OCI-LY7 (cell line): ENCODE measurements at regions of chr3 and their contacts with region 1.

Region 1: DNA sequence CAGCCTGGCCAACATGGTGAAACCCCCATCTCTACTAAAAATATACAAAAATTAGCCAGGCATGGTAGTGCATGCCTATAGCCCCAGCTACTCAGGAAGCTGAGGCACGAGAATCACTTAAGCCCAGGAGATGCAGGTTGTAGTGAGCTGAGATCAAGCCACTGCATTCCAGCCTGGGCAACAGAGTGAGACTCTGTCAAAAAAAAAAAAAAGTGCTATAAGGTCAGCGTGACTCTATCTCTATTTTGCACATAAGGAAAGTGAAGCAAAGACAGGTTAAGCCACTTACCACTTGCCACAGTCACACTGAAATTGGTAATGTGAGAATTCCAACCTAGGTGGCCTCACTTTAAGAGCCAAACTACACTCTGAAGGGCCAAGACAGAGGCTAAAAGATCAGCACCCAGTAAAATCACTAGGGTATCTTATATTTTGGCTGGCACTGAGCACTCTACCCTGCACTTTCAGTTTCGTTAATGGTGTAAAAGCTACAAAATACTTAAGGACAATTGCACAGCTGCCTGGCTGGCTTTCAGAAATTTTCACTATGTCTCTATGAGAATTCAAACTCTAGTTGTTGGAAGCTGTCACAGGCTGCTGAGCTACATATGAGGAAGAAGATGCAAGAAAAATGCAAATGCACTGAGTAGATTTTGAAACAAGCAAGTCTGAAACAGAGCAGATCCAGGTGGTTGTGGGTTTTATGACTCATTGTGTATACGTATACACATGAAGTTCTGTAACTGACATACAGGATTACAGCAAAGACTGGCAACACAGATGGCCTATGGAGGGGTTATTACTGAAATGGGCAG is 32.7 kb downstream of the TRANK1 start:
- DNase-seq: peak; percentile 98
- H3K4me3 ChIP-seq: peak overlapping the region; percentile 66
- H3K27ac ChIP-seq: peak overlapping the region; percentile 99
- H3K4me1 ChIP-seq: peaks cover 78% of the 10 kb centered on the region
- CTCF ChIP-seq: peak; percentile 20; the same call in 1 of the 2 replicates

Region 2: DNA sequence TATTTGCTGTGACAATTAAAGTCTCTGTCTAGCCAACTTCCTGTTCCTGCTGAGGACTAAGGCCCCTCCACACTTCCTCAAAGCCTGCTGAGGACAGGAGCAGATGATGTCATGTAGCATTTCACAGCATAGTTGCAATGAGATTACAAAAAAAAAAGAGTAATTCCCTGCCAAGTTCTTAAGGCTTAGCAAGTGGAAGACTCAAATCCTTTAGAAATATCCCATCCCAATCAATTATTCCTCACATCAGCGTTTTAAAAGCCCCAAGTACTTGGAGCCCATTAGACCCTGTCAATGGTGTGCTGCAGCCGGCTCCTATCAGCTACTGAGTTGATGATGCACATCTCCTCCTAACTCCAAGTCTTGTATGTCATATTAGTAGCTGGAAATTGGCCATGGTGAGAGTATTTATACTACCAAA is 19.1 kb before region 1 on chr3:
- CTCF ChIA-PET with region 1: interaction called, 3 read pairs
- POLR2A ChIA-PET with region 1: interaction called, 55 read pairs
- intact Hi-C with region 1: no loop called
- DNase-seq: peak; percentile 79
- H3K4me3 ChIP-seq: peak overlapping the region; percentile 34
- H3K27ac ChIP-seq: peak overlapping the region; percentile 82
- H3K4me1 ChIP-seq: peaks cover 67% of the 10 kb centered on the region
- CTCF ChIP-seq: no peak

Region 3: DNA sequence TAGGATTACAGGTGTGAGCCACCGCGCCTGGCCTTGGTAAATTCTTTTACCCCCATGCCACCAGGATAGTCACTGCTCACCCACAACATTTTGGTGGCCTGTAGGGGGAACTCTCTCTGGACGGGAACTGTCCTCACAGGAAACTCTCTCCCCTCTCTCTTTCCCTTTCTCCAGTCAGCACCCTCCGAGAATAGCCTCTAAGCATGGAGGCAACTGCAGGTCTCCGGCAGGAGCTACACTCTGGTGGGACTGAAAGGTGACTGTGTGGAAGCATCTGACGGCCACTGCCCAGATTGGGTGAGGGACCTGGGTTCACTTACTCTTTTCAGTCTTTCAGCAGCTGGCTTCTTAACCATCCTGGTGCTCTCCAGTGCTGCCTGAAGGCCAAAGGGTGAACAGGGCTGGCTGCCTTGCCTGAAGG is 11.3 kb after region 1 on chr3:
- CTCF ChIA-PET with region 1: interaction called, 7 read pairs
- POLR2A ChIA-PET with region 1: interaction called, 50 read pairs
- intact Hi-C with region 1: loop called (anchors 1 kb)
- DNase-seq: peak; percentile 60
- H3K4me3 ChIP-seq: peak overlapping the region; percentile 76
- H3K27ac ChIP-seq: peak overlapping the region; percentile 87
- H3K4me1 ChIP-seq: peaks cover 61% of the 10 kb centered on the region
- CTCF ChIP-seq: peak; percentile 70

Region 4: DNA sequence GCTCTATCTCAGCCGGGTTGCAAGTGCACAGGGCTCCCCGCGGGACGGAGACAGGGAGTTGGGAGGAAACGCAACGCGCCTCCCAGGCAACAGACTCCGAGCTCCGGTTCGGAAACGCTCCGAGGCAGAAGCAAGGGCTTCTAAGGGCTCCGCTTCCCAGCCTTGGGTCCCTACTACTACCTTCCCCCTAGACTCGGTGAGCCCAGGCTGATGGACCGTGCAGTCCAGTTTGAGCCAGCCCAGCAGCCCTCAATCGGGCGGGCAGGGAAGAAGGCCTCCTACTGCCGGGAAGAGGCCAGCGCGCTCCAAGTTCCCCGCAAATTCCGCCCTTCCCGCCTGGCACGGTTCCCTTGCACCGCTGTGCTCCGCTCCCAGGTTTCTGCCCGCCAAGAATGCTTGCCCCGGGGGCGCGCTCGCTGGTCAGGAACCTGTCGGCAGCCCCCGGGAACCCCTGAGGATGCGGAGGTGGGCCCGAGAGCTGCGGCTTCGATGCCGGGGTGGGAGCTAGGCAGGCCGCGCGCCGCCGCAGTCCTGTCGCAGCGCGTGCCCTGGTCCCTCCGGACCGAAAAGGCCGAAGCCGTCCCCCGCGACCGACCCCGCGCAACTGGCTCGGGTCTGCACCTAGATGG is 31.9 kb after region 1 on chr3:
- CTCF ChIA-PET with region 1: no interaction called
- POLR2A ChIA-PET with region 1: interaction called, 20 read pairs
- intact Hi-C with region 1: loop called (anchors 1 kb)
- DNase-seq: peak; percentile 62
- H3K4me3 ChIP-seq: peak overlapping the region; percentile 70
- H3K27ac ChIP-seq: peak overlapping the region; percentile 10
- H3K4me1 ChIP-seq: peaks cover 11% of the 10 kb centered on the region
- CTCF ChIP-seq: no peak

Region 5: GRCh38 chr3:36993326-36994283 is 81.4 kb after region 1 on chr3 and contains the start of gene MLH1:
- CTCF ChIA-PET with region 1: no interaction called
- POLR2A ChIA-PET with region 1: interaction called, 5 read pairs
- intact Hi-C with region 1: loop called (anchors 2 kb)
- DNase-seq: peak; percentile 100
- H3K4me3 ChIP-seq: peak within 1 kb of the TSS; percentile 83
- H3K27ac ChIP-seq: peak within 1 kb of the TSS; percentile 81
- H3K4me1 ChIP-seq: peaks cover 25% of the 10 kb centered on the region
- CTCF ChIP-seq: no peak
- total RNA-seq, gene MLH1: 94.2 and 124 TPM in 2 replicates